Heart right ventricle (tissue), 16 donors: ENCODE measurements at regions of chr12 and their contacts with region 1.

Region 1: DNA sequence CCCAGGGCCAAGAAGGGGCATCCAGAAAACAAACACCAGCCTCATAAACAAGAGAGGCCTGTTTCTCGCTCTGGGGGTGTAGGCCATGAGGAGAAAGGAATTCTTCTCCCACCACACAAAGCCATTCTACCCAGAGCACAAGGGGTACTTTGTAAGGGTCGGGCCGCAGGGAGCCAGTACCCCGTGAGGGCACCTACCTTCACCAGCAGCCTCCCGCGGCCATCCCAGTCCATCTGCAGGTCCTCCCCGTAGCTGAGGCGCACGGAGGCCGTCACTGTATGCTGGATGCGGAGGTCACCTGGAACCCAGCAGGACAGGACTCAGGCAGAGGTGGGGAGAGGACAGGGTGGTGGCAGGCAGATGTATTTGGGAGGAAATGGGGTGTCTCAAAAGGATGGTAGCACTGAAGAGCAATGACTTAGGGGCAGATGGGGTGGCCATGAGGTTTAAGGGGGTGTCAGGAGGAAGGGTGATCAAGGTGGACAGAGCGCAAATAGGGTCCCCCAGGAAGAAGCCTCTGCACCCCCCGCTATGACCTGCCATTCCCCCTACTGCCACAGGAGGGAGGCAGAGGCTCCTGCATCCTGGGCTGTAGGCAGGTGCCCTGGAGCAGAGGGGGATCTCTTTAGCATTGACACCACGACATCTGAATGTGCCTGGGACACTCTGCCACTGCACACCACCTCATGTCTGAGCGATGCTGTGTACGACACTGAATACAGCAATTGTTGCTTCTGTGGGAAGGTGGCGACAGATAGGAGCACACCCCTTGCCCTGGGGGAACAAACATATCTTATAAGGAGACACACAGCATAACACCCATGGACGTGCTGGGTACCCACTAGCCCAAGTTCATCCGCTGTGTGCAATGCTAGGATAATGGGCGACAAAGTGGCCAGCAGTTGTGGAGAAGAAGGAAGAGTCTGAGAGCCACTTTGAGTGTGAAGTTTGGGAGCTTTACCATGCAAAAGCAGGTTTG is 61.4 kb downstream of the VWF start:
- DNase-seq: peak in 1 of 2 donors; percentile 51
- ATAC-seq: peak in 7 of 8 donors; percentile 36 to 68 (median 58)
- H3K4me3 ChIP-seq: no peak overlapping the region
- H3K27ac ChIP-seq: peak overlapping the region in 1 of 10 donors; percentile 19
- H3K4me1 ChIP-seq: peaks cover 0 to 33% (median 2%) of the 10 kb centered on the region in 9 donors
- H3K27me3 ChIP-seq: no peaks in the 10 kb centered on the region
- CTCF ChIP-seq: peak; percentile 79 to 95 (median 84)

Region 2: GRCh38 chr12:5861416-5861815 is 201.6 kb before region 1 on chr12:
- intact Hi-C with region 1: no loop called
- DNase-seq: no peak
- ATAC-seq: no peak
- H3K4me3 ChIP-seq: no peak overlapping the region
- H3K27ac ChIP-seq: no peak overlapping the region
- H3K4me1 ChIP-seq: no peaks in the 10 kb centered on the region
- H3K27me3 ChIP-seq: peaks cover 0 to 14% (median 5%) of the 10 kb centered on the region in 7 donors
- CTCF ChIP-seq: no peak

Region 3: DNA sequence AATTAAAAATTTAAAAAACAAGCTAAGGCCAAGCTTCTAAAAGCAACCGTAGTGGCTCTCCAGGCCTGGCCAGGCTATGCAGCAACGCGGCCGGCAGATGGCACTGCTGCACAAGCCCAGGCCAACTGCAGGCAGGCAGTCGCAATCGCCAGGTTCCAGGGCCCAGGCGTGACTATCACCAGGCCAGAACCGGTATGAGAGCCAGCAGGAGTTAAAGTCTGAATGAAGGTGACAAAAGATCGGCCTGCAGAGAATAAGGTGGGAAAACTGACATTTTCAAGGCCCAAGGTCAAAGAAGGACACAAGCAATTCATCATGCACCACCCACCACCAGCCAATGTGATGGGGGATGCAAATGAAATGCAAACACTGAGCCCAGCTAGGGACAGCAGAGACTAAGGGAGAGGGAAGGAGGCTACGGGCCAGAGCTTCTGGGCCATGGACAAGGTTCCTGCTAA is 74.4 kb before region 1 on chr12:
- intact Hi-C with region 1: no loop called
- DNase-seq: peak; percentile 65 to 77
- ATAC-seq: peak; percentile 80 to 93 (median 90)
- H3K4me3 ChIP-seq: no peak overlapping the region
- H3K27ac ChIP-seq: no peak overlapping the region
- H3K4me1 ChIP-seq: peaks cover 0 to 9% (median 0%) of the 10 kb centered on the region in 9 donors
- H3K27me3 ChIP-seq: peaks cover 0 to 3% (median 0%) of the 10 kb centered on the region in 7 donors
- CTCF ChIP-seq: peak; percentile 87 to 97 (median 94)

Region 4: GRCh38 chr12:6182116-6182898 is 119.3 kb after region 1 on chr12:
- intact Hi-C with region 1: loop called in 3 of 10 experiments (anchors 5 kb)
- DNase-seq: peak; percentile 59 to 69
- ATAC-seq: peak; percentile 46 to 79 (median 76)
- H3K4me3 ChIP-seq: peak overlapping the region in 2 of 10 donors; percentile 6 to 21
- H3K27ac ChIP-seq: peak overlapping the region; percentile 50 to 80 (median 66)
- H3K4me1 ChIP-seq: peaks cover 21 to 69% (median 44%) of the 10 kb centered on the region in 9 donors
- H3K27me3 ChIP-seq: no peaks in the 10 kb centered on the region
- CTCF ChIP-seq: no peak

Region 5: DNA sequence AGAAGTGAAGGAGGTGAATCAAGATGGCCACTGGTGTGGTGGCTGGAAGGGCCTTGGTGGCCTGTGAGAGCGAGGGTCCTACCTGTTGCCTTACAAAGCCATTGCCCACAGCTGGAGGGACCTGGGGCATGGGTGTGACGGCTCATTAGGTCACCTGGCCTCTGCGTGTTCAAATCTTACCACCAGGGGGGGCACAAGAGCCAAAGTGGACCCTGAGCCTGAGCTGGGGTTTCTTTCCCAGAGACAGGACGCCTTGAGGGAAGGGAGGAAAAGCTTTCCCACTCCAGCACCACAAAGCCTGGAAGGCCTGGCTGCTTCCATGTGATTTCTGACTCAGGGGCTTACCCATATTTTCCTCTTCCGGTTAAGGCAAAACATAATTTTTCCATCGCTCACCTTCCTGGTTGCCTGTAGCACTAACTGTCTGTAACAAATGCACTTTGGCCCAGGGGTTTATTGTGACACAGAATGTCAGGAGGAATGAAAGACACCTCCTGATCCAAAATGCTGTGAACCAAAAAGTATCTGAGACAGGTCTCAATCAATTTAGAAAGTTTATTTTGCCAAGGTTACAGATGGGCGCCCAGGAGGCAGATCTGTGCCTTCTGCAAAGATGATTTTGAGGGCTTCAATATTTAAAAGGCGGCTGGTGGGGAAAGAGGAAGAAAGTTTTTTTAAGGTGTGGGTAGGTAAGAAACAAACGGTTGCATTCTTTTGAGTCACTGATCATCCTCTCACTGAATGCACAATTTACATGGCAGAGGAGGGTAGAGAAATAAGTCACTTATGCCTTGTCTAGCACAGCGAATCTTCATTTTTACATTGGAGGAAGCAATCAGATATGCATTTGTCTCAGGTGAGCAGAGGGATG is 132.9 kb after region 1 on chr12:
- intact Hi-C with region 1: loop called in 5 of 10 experiments (anchors 5 kb)
- DNase-seq: peak; percentile 83 to 93
- ATAC-seq: peak; percentile 72 to 87 (median 82)
- H3K4me3 ChIP-seq: no peak overlapping the region
- H3K27ac ChIP-seq: peak overlapping the region in 9 of 10 donors; percentile 27 to 83 (median 74)
- H3K4me1 ChIP-seq: peaks cover 0 to 39% (median 18%) of the 10 kb centered on the region in 9 donors
- H3K27me3 ChIP-seq: peaks cover 0 to 30% (median 0%) of the 10 kb centered on the region in 7 donors
- CTCF ChIP-seq: peak; percentile 88 to 98 (median 94)

Region 6: DNA sequence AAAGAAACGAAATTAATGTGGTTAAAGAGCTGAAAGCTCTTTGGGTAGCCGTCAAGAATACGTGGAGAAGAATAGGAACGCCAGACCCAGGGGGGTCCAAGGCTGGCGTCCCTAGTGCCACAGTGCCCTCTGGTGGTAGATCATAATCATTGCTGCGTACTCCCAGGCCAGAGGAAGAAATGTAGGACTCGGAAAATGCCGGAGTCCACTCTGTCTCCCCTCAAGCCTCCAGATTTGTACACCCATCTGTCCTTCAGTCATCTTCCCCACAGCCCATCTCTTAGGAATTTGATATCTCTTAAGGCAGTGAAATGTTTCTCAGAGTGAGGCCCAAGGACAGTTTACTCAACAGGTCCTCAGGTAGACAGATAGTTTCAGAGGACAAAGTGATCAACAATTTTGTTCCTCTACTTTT is 222.0 kb after region 1 on chr12:
- intact Hi-C with region 1: loop called in 9 of 10 experiments (anchors 1 to 5 kb)
- DNase-seq: peak; percentile 47 to 74
- ATAC-seq: peak; percentile 68 to 91 (median 88)
- H3K4me3 ChIP-seq: no peak overlapping the region
- H3K27ac ChIP-seq: no peak overlapping the region
- H3K4me1 ChIP-seq: peaks cover 0 to 14% (median 3%) of the 10 kb centered on the region in 9 donors
- H3K27me3 ChIP-seq: peaks cover 0 to 4% (median 0%) of the 10 kb centered on the region in 7 donors
- CTCF ChIP-seq: peak; percentile 89 to 98 (median 95)